Gastrocnemius medialis (tissue), 4 donors: ENCODE measurements at regions of chr1 and their contacts with region 1.

Region 1: GRCh38 chr1:155244368-155245162 is 10.7 kb downstream of the ENTREP3 start:
- DNase-seq: peak; percentile 97 to 98
- ATAC-seq: peak; percentile 96 to 97
- H3K4me3 ChIP-seq: peak overlapping the region; percentile 56 to 79 (median 70)
- H3K27ac ChIP-seq: peak overlapping the region; percentile 80 to 94 (median 90)
- H3K4me1 ChIP-seq: peaks cover 25 to 26% of the 10 kb centered on the region in 2 donors
- H3K27me3 ChIP-seq: no peaks in the 10 kb centered on the region
- CTCF ChIP-seq: peak; percentile 23 to 99 (median 77)
- POLR2A ChIP-seq: peak; percentile 84 to 90

Region 2: GRCh38 chr1:154627257-154628120 is 617.1 kb before region 1 on chr1:
- in situ Hi-C with region 1: no loop called
- intact Hi-C with region 1: no loop called
- DNase-seq: peak; percentile 71 to 80
- ATAC-seq: peak; percentile 79 to 83
- H3K4me3 ChIP-seq: peak overlapping the region; percentile 91 to 100 (median 95)
- H3K27ac ChIP-seq: peak overlapping the region; percentile 82 to 89 (median 84)
- H3K4me1 ChIP-seq: peaks cover 13 to 19% of the 10 kb centered on the region in 2 donors
- H3K27me3 ChIP-seq: no peaks in the 10 kb centered on the region
- CTCF ChIP-seq: no peak
- POLR2A ChIP-seq: no peak

Region 3: GRCh38 chr1:155063550-155064110 is 180.9 kb before region 1 on chr1 and contains the start of gene EFNA4:
- in situ Hi-C with region 1: no loop called
- intact Hi-C with region 1: no loop called
- DNase-seq: peak; percentile 69 to 72
- ATAC-seq: peak; percentile 91 to 93
- H3K4me3 ChIP-seq: peak within 1 kb of the TSS; percentile 60 to 91 (median 78)
- H3K27ac ChIP-seq: peak within 1 kb of the TSS; percentile 69 to 80 (median 75)
- H3K4me1 ChIP-seq: peaks cover 9 to 18% of the 10 kb centered on the region in 2 donors
- H3K27me3 ChIP-seq: no peaks in the 10 kb centered on the region
- CTCF ChIP-seq: no peak
- POLR2A ChIP-seq: peak in 1 of 2 donors; percentile 28
- total RNA-seq, gene EFNA4: 0.41 to 0.87 (median 0.80) TPM

Region 4: GRCh38 chr1:155208541-155209311 is 35.8 kb before region 1 on chr1 and contains the start of gene MTX1:
- in situ Hi-C with region 1: no loop called
- intact Hi-C with region 1: loop called (anchors 5 kb)
- DNase-seq: peak; percentile 78 to 79
- ATAC-seq: peak; percentile 82 to 84
- H3K4me3 ChIP-seq: peak within 1 kb of the TSS; percentile 88 to 95 (median 90)
- H3K27ac ChIP-seq: peak within 1 kb of the TSS; percentile 93 to 99 (median 96)
- H3K4me1 ChIP-seq: peaks cover 16 to 28% of the 10 kb centered on the region in 2 donors
- H3K27me3 ChIP-seq: no peaks in the 10 kb centered on the region
- CTCF ChIP-seq: peak in 1 of 5 experiments; percentile 4
- POLR2A ChIP-seq: peak; percentile 42 to 67
- total RNA-seq, gene MTX1: 14.4 to 26.9 (median 24.6) TPM

Region 5: GRCh38 chr1:155218854-155219591 is 25.5 kb before region 1 on chr1:
- in situ Hi-C with region 1: no loop called
- intact Hi-C with region 1: loop called (anchors 1 kb)
- DNase-seq: peak in 1 of 2 donors; percentile 40
- ATAC-seq: peak; percentile 77 to 80
- H3K4me3 ChIP-seq: peak overlapping the region; percentile 1 to 39 (median 13)
- H3K27ac ChIP-seq: peak overlapping the region in 1 of 4 donors; percentile 18
- H3K4me1 ChIP-seq: no peaks in the 10 kb centered on the region
- H3K27me3 ChIP-seq: no peaks in the 10 kb centered on the region
- CTCF ChIP-seq: no peak
- POLR2A ChIP-seq: no peak

Region 6: DNA sequence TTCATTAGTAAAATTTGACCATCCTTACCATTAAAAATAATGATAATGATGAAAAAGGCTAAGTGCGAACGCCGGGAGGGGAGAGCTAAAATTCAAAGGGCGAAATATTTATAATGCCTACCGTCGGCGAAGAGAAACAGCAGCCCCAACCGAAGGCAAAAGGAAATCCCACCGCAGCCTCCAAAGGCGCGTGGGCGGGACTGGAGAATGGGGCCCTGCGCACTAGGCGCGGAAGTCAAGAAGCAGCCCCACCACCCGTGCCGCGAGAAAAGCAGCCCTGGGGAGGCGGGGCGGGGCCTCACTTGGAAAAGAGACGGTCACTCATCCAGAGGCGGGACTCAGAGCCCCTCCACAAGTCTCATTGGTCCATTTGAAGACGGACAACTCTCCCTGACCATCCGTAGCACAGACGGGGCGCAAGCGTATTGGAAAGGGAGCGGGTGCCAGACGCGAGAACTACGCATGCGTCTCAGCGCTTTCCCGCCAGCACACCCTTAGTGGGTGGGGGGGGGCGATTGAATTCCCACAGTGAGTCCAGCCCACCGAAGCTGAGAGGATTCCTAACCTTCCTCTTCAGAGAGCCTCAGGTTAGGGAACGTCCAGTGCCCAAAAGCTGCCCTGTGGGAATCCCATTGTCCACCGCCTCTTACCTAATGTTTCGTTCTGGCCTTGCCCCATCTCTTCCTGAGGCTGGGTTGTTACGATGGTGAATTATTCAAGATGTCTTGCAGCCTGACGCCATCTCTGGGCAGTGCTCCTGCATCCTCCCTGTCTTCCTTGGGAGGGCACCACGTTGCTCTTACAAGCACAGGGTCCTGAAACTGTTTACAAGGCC is 17.1 kb before region 1 on chr1:
- in situ Hi-C with region 1: no loop called
- intact Hi-C with region 1: loop called (anchors 2 kb)
- DNase-seq: peak; percentile 97 to 99
- ATAC-seq: peak; percentile 99 to 100
- H3K4me3 ChIP-seq: peak overlapping the region; percentile 55 to 92 (median 70)
- H3K27ac ChIP-seq: peak overlapping the region; percentile 77 to 83 (median 78)
- H3K4me1 ChIP-seq: peaks cover 8 to 15% of the 10 kb centered on the region in 2 donors
- H3K27me3 ChIP-seq: no peaks in the 10 kb centered on the region
- CTCF ChIP-seq: peak in 1 of 5 experiments; percentile 3
- POLR2A ChIP-seq: peak; percentile 53 to 74

Region 7: DNA sequence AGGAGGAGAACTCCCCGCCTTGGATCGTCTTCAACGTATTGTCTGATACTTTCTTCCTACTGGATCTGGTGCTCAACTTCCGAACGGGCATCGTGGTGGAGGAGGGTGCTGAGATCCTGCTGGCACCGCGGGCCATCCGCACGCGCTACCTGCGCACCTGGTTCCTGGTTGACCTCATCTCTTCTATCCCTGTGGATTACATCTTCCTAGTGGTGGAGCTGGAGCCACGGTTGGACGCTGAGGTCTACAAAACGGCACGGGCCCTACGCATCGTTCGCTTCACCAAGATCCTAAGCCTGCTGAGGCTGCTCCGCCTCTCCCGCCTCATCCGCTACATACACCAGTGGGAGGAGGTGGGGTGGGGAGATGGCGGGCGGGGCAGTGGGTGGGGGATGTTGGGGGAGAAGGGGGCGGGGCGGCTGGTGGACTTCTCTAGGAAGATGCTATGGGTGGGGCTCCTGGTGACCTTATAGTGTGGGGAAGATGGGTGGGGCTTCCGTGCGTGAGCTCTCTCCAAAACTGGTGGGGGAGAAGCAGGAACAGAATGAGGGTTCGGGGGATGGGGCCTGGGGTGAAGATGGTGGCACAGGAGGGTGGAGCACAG is 38.0 kb after region 1 on chr1:
- in situ Hi-C with region 1: loop called in 1 of 4 experiments (anchors 5 kb)
- intact Hi-C with region 1: no loop called
- DNase-seq: no peak
- ATAC-seq: no peak
- H3K4me3 ChIP-seq: no peak overlapping the region
- H3K27ac ChIP-seq: no peak overlapping the region
- H3K4me1 ChIP-seq: peaks cover 6 to 7% of the 10 kb centered on the region in 2 donors
- H3K27me3 ChIP-seq: no peaks in the 10 kb centered on the region
- CTCF ChIP-seq: no peak
- POLR2A ChIP-seq: no peak

Region 8: GRCh38 chr1:155622191-155622590 is 377.6 kb after region 1 on chr1:
- in situ Hi-C with region 1: no loop called
- intact Hi-C with region 1: no loop called
- DNase-seq: no peak
- ATAC-seq: no peak
- H3K4me3 ChIP-seq: no peak overlapping the region
- H3K27ac ChIP-seq: no peak overlapping the region
- H3K4me1 ChIP-seq: no peaks in the 10 kb centered on the region
- H3K27me3 ChIP-seq: no peaks in the 10 kb centered on the region
- CTCF ChIP-seq: no peak
- POLR2A ChIP-seq: no peak